ENCODE measurements at regions of chr14 and their contacts with region 1.

Region 1: DNA sequence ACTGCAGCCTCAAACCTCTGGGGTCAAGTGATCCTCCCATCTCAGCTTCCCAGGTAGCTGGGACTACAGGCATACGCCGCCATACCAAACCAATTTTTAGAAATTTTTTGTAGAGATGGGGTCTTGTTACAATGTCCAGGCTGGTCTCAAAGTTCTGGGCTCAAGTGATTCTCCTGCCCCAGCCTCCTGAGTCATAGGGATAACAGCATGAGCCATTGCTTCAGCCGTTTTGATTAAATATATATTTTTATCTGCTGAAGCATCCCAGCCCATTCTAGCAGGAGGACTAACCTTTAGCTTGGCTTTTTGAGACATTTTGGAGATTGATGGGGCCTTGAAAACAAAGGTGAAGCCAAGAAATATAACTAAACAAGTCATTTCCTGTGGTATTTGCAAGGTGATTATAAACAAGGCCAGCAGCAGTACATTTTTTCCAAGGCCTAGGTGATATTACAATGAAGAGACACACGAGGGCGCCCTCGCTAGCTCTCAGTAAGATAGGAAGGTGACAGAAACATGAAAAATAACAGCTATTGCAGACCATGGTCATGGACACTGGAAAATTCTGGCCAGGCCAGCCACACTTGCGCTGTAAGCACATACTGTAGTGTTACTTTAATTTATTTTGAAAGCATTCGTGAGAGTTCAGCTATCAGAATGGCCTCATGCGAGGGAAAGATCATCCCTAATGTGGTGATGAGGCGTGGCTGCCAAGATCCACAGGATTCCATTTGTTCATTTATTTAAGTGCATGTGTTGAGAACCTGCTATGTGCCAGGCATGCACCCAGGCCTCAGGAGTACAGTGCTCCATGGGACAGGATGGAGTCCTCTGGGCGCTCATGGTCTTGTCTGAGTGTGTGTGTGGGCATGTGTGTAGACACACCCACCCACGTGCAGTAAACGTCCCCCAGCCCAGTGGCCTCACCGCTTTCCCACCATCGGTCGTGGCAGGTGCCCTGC is 63.5 kb downstream of the DGLUCY start:
- DNase-seq: peak; percentile 37 to 88 (median 64)
- ATAC-seq: peak; percentile 93
- H3K4me3 ChIP-seq: no peak overlapping the region
- H3K4me3 Mint-ChIP-seq: no peak overlapping the region
- H3K27ac ChIP-seq: peak overlapping the region in 1 of 2 experiments; percentile 52
- H3K27ac Mint-ChIP-seq: peak overlapping the region; percentile 89
- H3K4me1 ChIP-seq: peaks cover 5% of the 10 kb centered on the region
- H3K4me1 Mint-ChIP-seq: peaks cover 12% of the 10 kb centered on the region
- H3K27me3 ChIP-seq: no peaks in the 10 kb centered on the region
- H3K27me3 Mint-ChIP-seq: no peaks in the 10 kb centered on the region
- CTCF ChIP-seq: peak; percentile 89

Region 2: DNA sequence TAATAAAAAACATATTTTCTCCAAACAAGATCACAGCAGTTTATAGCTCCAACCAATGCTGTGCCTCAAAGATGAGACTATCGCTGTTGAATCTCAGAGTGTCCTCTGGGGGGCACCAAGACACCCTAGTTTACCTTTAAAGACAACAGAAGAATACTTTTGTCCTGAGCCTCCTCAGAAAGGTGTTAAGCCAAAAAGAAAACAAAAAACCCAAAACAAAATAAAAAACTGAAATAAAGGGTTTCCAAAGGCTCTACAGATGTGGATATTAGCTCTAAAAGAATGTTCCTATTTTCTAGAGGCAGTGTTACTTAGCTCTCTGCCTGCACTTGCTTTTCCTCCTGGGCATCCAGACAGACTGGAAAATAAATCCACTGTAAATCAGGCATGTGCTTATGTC is 274.3 kb before region 1 on chr14:
- CTCF ChIA-PET with region 1: interaction called, 330 read pairs
- POLR2A ChIA-PET with region 1: interaction called, 3 read pairs
- intact Hi-C with region 1: loop called in 1 of 2 experiments (anchors 1 kb)
- DNase-seq: peak; percentile 12 to 77 (median 59)
- ATAC-seq: peak; percentile 83
- H3K4me3 ChIP-seq: no peak overlapping the region
- H3K4me3 Mint-ChIP-seq: no peak overlapping the region
- H3K27ac ChIP-seq: no peak overlapping the region
- H3K27ac Mint-ChIP-seq: no peak overlapping the region
- H3K4me1 ChIP-seq: no peaks in the 10 kb centered on the region
- H3K4me1 Mint-ChIP-seq: no peaks in the 10 kb centered on the region
- H3K27me3 ChIP-seq: no peaks in the 10 kb centered on the region
- H3K27me3 Mint-ChIP-seq: no peaks in the 10 kb centered on the region
- CTCF ChIP-seq: peak; percentile 83

Region 3: DNA sequence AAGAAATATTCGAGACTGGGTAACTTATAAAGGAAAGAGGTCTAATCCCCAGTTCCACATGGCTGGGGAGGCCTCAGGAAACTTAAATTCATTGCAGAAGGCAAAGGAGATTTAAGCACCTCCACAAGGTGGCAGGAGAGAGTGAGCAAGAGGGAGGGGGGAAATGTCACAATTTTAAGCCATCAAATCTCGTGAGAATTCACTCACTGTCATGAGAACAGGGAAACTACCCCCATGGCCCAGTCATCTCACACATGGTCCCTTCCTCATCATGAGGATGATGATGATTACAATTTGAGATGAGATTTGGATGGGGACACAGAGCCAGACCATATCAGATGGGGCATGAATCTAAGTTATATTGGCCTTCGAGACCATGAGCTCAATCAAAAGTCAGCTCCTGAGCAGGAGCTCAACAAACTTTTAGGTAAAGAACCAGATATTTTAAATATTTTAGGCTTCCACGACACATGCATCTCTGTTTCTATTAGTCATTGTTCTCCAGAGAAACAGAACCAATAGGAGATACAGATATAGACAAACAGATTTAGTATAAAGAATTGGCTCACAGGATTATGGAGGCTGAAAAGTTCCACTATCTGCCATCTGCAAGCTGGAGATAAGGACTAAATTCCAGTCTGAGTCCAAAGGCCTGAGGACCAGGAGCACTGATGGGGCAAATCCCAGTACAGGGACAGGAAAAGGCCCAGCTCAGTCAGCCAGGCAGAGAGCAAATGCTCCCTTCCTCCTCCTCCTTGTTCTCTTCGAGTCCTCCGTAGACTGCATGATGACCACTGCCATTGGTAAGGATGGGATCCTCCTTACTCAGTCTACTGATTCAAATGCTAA is 38.6 kb before region 1 on chr14:
- CTCF ChIA-PET with region 1: interaction called, 14 read pairs
- POLR2A ChIA-PET with region 1: no interaction called
- intact Hi-C with region 1: no loop called
- DNase-seq: peak in 7 of 9 experiments; percentile 19 to 74 (median 41)
- ATAC-seq: peak; percentile 72
- H3K4me3 ChIP-seq: no peak overlapping the region
- H3K4me3 Mint-ChIP-seq: no peak overlapping the region
- H3K27ac ChIP-seq: no peak overlapping the region
- H3K27ac Mint-ChIP-seq: peak overlapping the region; percentile 22
- H3K4me1 ChIP-seq: peaks cover 8% of the 10 kb centered on the region
- H3K4me1 Mint-ChIP-seq: peaks cover 24% of the 10 kb centered on the region
- H3K27me3 ChIP-seq: no peaks in the 10 kb centered on the region
- H3K27me3 Mint-ChIP-seq: no peaks in the 10 kb centered on the region
- CTCF ChIP-seq: peak; percentile 54

Region 4: GRCh38 chr14:91193069-91193468 is 15.7 kb after region 1 on chr14:
- CTCF ChIA-PET with region 1: interaction called, 45 read pairs
- POLR2A ChIA-PET with region 1: interaction called, 6 read pairs
- intact Hi-C with region 1: loop called in 1 of 2 experiments (anchors 1 kb)
- DNase-seq: no peak
- ATAC-seq: no peak
- H3K4me3 ChIP-seq: no peak overlapping the region
- H3K4me3 Mint-ChIP-seq: no peak overlapping the region
- H3K27ac ChIP-seq: no peak overlapping the region
- H3K27ac Mint-ChIP-seq: no peak overlapping the region
- H3K4me1 ChIP-seq: peaks cover 13% of the 10 kb centered on the region
- H3K4me1 Mint-ChIP-seq: peaks cover 20% of the 10 kb centered on the region
- H3K27me3 ChIP-seq: no peaks in the 10 kb centered on the region
- H3K27me3 Mint-ChIP-seq: no peaks in the 10 kb centered on the region
- CTCF ChIP-seq: no peak

Region 5: GRCh38 chr14:91249841-91250616 is 72.7 kb after region 1 on chr14:
- CTCF ChIA-PET with region 1: interaction called, 14 read pairs
- POLR2A ChIA-PET with region 1: interaction called, 11 read pairs
- intact Hi-C with region 1: loop called in 1 of 2 experiments (anchors 2 kb)
- DNase-seq: peak in 5 of 9 experiments; percentile 28 to 78 (median 45)
- ATAC-seq: no peak
- H3K4me3 ChIP-seq: no peak overlapping the region
- H3K4me3 Mint-ChIP-seq: peak overlapping the region; percentile 47
- H3K27ac ChIP-seq: peak overlapping the region; percentile 43 to 66
- H3K27ac Mint-ChIP-seq: peak overlapping the region; percentile 92
- H3K4me1 ChIP-seq: peaks cover 70% of the 10 kb centered on the region
- H3K4me1 Mint-ChIP-seq: peaks cover 78% of the 10 kb centered on the region
- H3K27me3 ChIP-seq: no peaks in the 10 kb centered on the region
- H3K27me3 Mint-ChIP-seq: no peaks in the 10 kb centered on the region
- CTCF ChIP-seq: no peak

Region 6: DNA sequence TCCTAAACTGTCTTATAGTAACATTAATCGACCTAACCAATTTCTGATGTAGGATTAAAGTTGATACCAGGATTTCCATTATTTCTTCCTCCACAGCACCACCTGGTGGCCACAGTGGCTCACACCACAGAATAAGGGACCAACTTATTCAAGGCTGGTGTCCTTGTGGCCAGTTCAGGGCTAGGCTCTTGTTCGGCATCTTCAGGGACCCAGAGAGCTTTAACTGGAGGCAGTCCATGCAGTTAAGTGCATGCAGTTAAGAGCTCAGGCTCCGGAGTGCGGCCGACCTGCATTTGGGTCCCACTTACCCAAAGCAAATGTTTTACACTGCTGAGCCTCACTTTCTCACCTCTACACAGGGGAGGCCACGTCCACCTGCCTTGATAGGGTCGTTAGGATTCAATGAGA is 109.2 kb after region 1 on chr14:
- CTCF ChIA-PET with region 1: interaction called, 400 read pairs
- POLR2A ChIA-PET with region 1: interaction called, 4 read pairs
- intact Hi-C with region 1: loop called (anchors 1 kb)
- DNase-seq: peak; percentile 62 to 87 (median 81)
- ATAC-seq: peak; percentile 83
- H3K4me3 ChIP-seq: no peak overlapping the region
- H3K4me3 Mint-ChIP-seq: no peak overlapping the region
- H3K27ac ChIP-seq: no peak overlapping the region
- H3K27ac Mint-ChIP-seq: peak overlapping the region; percentile 19
- H3K4me1 ChIP-seq: no peaks in the 10 kb centered on the region
- H3K4me1 Mint-ChIP-seq: peaks cover 5% of the 10 kb centered on the region
- H3K27me3 ChIP-seq: no peaks in the 10 kb centered on the region
- H3K27me3 Mint-ChIP-seq: no peaks in the 10 kb centered on the region
- CTCF ChIP-seq: peak; percentile 90

Region 7: DNA sequence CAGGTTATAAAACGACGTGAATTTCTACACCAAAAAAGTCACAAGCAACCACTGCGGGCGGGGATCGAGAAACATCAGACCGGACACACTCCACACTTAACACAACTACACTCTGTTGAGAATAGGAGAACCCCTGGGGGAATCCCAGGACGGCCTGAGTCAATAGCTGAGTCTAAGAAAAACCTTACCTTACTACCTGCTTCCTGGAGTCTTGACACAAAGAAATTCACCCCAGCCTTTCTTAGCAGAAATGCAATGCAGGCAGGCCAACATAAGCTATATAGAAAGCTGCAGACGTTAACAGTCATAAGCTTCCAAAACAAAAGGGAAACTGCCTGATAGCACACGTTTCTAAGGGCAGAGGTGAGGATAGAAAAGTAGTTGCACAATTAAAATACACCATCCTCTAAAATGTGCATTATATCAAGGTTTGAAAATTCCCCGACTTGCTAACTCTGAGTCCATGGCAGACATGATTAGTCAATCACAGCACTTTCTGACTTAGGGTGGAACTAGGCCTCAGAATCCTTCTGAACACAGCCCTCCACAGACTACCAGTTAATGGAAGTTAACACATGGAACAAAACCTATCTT is 172.2 kb after region 1 on chr14:
- CTCF ChIA-PET with region 1: no interaction called
- POLR2A ChIA-PET with region 1: no interaction called
- intact Hi-C with region 1: no loop called
- DNase-seq: peak in 6 of 9 experiments; percentile 40 to 92 (median 72)
- ATAC-seq: peak; percentile 59
- H3K4me3 ChIP-seq: no peak overlapping the region
- H3K4me3 Mint-ChIP-seq: peak overlapping the region; percentile 86
- H3K27ac ChIP-seq: peak overlapping the region; percentile 39 to 83
- H3K27ac Mint-ChIP-seq: peak overlapping the region; percentile 94
- H3K4me1 ChIP-seq: peaks cover 84% of the 10 kb centered on the region
- H3K4me1 Mint-ChIP-seq: peaks cover 84% of the 10 kb centered on the region
- H3K27me3 ChIP-seq: no peaks in the 10 kb centered on the region
- H3K27me3 Mint-ChIP-seq: no peaks in the 10 kb centered on the region
- CTCF ChIP-seq: no peak

Region 8: DNA sequence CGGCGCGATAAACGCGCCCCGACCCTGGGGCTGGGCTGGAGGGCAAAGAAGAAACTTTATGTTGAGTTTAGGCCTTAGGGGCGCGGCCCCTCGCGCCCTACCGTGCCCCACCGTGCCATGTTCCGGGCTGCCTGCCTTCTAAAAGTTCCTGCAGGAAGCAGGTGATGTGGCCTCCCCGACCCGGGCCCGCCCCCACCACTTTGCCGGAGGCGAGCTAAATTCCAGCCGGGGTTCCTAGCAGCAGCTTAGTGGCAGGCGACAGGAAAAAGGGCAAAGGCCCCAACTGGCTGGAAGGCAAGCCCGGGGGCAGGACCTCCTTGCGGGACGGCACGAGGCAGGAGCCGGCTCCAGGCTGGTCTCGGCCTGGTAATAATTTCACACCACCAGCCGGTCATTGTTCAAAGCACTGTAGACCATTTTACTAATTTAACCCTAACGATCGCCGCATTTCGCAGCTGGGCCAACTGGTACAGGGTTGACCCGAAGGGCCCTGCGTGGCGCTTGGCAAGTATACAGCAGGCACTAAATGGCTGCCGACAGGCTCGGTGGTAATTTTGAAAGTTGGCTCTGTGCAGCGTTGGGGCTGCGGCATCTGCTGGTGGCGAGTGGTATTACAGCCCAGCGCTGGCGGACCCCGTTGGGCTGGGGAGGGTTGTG is 241.2 kb after region 1 on chr14:
- CTCF ChIA-PET with region 1: interaction called, 6 read pairs
- POLR2A ChIA-PET with region 1: interaction called, 3 read pairs
- intact Hi-C with region 1: loop called (anchors 2 kb)
- DNase-seq: peak; percentile 73 to 93 (median 84)
- ATAC-seq: peak; percentile 32
- H3K4me3 ChIP-seq: peak overlapping the region; percentile 47 to 48
- H3K4me3 Mint-ChIP-seq: peak overlapping the region; percentile 80
- H3K27ac ChIP-seq: peak overlapping the region; percentile 19 to 60
- H3K27ac Mint-ChIP-seq: peak overlapping the region; percentile 92
- H3K4me1 ChIP-seq: peaks cover 28% of the 10 kb centered on the region
- H3K4me1 Mint-ChIP-seq: peaks cover 40% of the 10 kb centered on the region
- H3K27me3 ChIP-seq: no peaks in the 10 kb centered on the region
- H3K27me3 Mint-ChIP-seq: no peaks in the 10 kb centered on the region
- CTCF ChIP-seq: peak; percentile 93